ENCODE measurements at regions of chr9 and their contacts with region 1.

Region 1: DNA sequence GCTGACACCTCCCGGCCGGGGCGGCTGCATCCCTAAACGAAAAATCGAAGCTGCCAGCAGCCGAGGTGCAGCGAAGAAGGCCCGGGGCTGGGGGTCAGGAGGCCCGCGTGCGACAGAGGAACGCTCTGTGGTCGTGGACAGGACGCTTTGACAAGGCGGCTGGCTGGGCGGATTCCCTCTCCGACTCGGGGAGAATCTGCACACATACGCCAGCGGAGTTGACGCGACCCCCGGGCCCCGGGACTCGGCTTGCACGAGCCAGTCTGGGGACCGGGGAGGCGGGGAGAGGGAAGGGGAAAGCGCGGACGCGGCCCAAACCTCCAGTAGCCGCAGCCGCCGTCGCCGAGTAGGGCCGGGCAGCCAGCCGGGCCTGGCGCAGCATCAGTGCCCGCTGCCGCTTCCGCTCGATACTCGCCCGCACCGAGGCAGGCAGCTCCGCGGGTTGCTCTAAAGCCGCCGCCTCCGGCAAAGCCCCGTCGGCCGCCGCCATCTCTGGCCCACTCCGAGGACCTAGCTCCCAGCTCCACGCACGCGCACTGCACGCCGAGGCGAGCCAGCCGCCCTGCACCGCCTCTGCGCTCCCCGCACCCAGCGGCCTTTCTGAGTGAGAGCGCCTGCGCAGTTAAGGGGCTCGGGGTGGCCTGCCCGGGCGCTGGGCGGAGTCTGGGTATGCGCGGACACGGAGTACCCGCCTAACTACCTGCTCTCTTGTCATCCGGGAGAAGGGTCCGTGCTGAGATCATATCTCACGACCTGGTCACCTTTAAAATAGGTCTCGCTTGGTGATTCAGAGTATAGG is at the start of gene XPA:
- DNase-seq: peak; percentile 98
- ATAC-seq: peak; percentile 95
- H3K4me3 Mint-ChIP-seq: peak within 1 kb of the TSS; percentile 81
- H3K27ac Mint-ChIP-seq: peak within 1 kb of the TSS; percentile 92
- H3K4me1 Mint-ChIP-seq: peaks cover 45% of the 10 kb centered on the region
- H3K27me3 Mint-ChIP-seq: peaks cover 2% of the 10 kb centered on the region
- total RNA-seq, gene XPA: 8.7 to 11.1 TPM

Region 2: DNA sequence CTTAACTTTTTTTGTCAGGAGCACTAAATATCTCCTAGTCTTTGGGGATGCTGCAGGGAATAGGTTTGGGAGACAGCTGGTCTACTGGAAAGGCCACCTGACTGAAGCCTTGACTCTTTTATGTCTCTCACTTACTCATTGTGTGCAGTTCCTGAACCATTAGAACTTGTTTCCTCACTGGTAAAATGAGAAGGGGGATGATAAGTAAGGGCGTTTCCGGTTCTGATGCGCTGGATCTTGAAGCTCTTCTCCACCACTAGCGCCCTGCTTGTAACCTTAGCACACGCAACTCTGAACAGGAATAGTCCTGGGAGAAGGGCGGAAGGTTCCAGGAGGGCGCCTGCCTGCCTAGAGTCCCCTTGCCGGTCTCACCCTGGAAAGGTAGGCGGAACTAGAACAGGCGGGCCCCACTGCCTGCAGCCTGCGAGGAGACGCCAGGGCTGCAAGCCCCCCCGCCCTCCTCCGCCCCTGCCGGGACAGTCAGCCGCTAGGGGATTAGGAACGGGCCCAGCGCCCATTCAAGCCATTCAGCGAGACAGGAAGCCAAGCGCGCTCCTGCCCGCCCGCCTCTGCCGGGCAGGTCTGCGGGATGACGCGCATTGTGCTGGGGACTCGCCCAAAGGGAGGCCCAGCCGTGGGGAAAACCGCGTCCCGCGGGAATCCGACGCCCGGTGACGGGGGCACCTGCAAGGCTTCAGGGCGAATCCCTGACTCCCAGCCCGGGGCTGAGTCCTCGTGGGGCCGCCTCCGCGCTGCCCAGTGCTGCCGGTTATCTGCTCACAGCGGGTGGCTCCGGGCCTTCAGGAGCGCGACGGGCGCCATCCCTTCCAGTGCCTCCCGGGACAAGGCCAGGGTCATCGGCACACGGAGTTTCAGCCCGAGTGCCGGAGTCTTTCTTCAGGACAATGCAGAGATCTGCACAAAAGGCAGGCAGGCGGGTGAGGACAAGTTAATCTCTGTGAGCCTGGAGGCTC is 44.1 kb after region 1 on chr9:
- CTCF ChIA-PET with region 1: no interaction called
- POLR2A ChIA-PET with region 1: interaction called, 10 read pairs
- intact Hi-C with region 1: no loop called
- DNase-seq: peak; percentile 67
- ATAC-seq: peak; percentile 82
- H3K4me3 Mint-ChIP-seq: peak overlapping the region; percentile 26
- H3K27ac Mint-ChIP-seq: no peak overlapping the region
- H3K4me1 Mint-ChIP-seq: peaks cover 6% of the 10 kb centered on the region
- H3K27me3 Mint-ChIP-seq: peaks cover 59% of the 10 kb centered on the region

Region 3: DNA sequence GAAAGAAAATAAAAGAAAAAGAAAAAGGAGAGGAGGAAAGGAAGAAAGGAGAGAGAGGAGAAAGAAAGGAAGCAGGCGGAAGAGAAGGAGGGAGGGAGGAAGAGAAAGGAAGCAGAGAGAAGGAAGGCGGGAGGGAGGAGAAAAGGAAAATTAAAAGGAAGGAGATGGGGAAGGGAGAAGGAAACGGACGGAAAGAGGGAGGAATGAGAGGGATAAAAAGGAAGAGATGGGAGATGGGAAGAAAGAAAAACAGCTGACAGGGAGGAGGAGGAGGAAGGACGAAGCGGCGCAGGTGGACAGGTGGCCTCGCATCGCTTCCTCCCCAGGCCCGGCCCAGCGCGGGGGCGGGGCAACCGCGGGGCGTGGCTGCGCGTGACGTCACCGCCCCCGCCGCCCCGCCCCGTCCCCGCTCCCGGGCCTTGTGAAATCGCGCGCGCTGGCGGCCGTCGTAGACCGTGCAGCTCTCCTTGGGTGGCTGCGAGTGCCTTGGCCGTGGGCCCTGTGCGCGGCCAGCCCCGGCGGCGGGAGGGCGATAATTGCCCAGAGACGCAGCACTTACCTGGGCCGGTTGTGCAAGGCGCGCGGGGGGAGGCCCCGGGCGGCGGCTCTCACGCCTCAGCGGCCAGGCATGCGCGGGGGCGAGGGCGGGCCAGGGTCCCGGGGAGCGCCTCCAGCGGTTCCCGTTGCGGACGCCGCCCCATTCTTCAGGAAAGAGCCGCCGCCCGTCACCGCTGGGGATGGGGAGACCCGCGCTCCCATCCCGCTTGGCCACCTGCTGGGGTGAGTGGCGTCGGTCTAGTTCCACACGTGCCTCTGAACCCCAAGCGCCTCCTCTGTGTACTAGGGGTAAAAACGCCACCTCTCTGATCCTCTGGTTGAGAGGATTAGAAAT is 106.4 kb after region 1 on chr9:
- CTCF ChIA-PET with region 1: no interaction called
- POLR2A ChIA-PET with region 1: no interaction called
- intact Hi-C with region 1: loop called in 1 of 2 experiments (anchors 1 kb)
- DNase-seq: peak; percentile 86
- ATAC-seq: peak; percentile 90
- H3K4me3 Mint-ChIP-seq: peak overlapping the region; percentile 72
- H3K27ac Mint-ChIP-seq: peak overlapping the region; percentile 67
- H3K4me1 Mint-ChIP-seq: peaks cover 10% of the 10 kb centered on the region
- H3K27me3 Mint-ChIP-seq: peaks cover 21% of the 10 kb centered on the region

Region 4: DNA sequence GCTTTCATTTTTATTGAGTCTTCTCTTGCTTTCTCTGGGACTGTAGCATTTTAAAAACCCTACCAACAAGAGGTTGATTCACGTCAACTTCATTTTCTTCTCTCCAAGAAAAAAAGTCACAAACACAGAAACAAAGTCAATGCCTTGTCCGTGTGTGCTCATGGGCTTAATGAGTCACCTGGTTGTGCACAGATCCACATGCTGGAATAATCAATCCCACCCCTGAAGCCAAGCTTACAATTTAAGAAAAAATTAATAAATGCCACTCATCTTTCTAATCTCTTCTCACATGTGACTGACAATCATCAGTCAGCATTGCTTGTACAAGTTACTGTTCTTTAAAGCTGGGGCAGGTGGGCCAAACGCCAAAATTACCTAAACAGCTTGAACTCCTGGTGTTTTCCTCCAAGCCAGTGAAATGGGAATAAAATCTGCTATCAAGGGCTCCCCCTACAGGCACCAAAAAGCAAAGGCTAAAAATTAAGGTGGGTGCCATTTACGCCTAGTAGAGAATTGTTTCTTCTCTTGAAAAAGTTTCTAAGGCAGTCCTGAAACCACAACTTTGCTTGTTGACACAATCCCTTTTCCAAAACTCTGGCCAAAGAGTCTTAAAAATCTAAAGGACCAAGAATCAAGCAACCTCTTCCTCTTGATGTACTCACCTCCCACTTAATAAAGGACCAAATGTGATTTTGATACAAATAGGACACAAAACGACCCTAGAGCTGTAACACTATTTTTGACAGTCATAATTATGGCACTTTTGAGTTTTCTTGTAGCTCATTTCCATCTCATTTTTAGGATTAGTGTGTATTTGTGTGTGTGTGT is 203.9 kb after region 1 on chr9:
- CTCF ChIA-PET with region 1: interaction called, 4 read pairs
- POLR2A ChIA-PET with region 1: interaction called, 4 read pairs
- intact Hi-C with region 1: loop called (anchors 5 kb)
- DNase-seq: no peak
- ATAC-seq: no peak
- H3K4me3 Mint-ChIP-seq: no peak overlapping the region
- H3K27ac Mint-ChIP-seq: peak overlapping the region; percentile 56
- H3K4me1 Mint-ChIP-seq: peaks cover 53% of the 10 kb centered on the region
- H3K27me3 Mint-ChIP-seq: no peaks in the 10 kb centered on the region

Region 5: DNA sequence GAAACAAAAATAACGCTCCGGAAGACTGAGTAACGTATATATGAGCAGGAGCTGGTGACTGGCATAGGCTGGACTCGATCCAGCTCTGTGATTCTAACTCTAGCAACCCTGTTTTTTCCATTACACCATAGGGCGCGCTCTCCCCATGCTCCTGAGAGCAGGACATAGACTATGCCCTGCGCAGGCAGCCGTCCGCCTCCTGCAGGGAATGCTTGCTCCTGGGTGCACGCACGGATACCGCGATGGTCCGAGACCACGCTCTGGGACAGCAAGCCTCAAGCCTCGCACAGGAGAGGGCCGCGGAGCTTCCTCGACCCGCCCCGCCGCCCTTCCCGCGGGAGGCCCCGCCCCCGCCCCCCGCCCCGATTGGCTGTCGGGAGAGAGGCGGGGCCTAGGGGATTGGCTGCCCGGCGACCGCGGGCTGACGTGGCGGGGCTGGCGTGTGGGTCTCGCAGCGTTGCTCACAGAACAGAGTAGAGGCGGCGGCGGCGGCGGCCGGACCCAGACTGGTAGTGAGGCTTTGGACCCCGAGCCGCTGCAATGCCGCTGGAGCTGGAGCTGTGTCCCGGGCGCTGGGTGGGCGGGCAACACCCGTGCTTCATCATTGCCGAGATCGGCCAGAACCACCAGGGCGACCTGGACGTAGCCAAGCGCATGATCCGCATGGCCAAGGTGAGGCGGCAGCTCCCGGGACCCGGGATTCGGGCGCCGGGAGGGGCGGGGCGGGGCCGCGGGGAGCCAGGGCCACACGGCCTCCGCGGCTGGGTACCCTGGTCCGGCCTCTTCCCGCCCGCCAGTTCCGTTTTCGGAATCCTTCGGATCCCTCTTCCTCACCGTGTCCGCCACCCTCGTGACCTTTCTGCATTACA is 359.5 kb after region 1 on chr9 and contains the start of gene NANS:
- CTCF ChIA-PET with region 1: no interaction called
- POLR2A ChIA-PET with region 1: no interaction called
- intact Hi-C with region 1: loop called in 1 of 2 experiments (anchors 2 kb)
- DNase-seq: peak; percentile 97
- ATAC-seq: peak; percentile 94
- H3K4me3 Mint-ChIP-seq: peak within 1 kb of the TSS; percentile 94
- H3K27ac Mint-ChIP-seq: peak within 1 kb of the TSS; percentile 98
- H3K4me1 Mint-ChIP-seq: peaks cover 28% of the 10 kb centered on the region
- H3K27me3 Mint-ChIP-seq: no peaks in the 10 kb centered on the region
- total RNA-seq, gene NANS: 45.9 to 47.7 TPM